H1 (cell line): ENCODE measurements at regions of chr7 and their contacts with region 1.

Region 1: DNA sequence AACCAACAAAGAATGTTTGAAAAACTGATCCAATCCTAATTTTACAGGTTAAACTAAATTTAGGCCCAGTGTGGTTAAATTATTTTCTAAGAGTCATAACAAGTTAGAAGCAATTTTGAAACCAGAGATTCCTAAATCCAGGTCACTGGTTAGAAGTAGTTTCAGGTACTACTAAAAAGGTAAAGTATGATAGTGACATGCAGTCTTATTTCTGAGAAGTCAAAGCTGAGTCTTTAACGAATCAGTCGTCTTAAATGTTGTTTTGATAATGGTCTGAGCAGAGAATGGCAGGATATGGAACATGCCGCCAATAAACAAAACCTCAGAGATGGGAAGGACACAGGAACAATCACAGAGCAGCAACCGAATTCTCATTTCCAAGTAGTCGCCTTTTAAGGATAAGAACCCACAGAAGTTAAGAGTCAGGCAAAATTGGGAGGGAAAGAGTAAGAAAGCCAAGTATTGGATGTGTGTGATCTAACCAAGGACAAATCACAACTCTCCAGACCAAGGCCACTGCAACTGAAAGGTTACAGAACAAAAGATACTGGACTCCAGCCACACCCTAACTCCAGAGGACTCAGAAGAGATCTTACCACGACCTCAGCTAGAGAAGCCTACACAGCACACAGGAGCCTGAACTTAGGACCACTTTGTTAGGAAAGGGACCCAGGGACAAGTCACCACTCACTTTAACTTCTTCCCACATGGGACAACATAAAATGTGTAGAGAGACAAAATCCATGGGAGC is 19.7 kb downstream of the TMEM243 start:
- DNase-seq: no peak
- H3K4me3 ChIP-seq: no peak overlapping the region
- H3K27ac ChIP-seq: no peak overlapping the region
- H3K4me1 ChIP-seq: 0 out of 7 replicates have a peak, but pooled peaks cover 0 to 2% (median 0%) of the 10 kb centered on the region in 4 experiments
- H3K27me3 ChIP-seq: no peaks in the 10 kb centered on the region
- CTCF ChIP-seq: no peak
- EP300 ChIP-seq: no peak
- POLR2A ChIP-seq: peak in 1 of 2 experiments; percentile 33; a peak in 1 of 3 replicates
- RAD21 ChIP-seq: no peak

Region 2: GRCh38 chr7:87213811-87214210 is 13.9 kb after region 1 on chr7:
- CTCF ChIA-PET with region 1: interaction called, 5 read pairs
- POLR2A ChIA-PET with region 1: interaction called, 18 read pairs
- DNase-seq: no peak
- H3K4me3 ChIP-seq: no peak overlapping the region
- H3K27ac ChIP-seq: no peak overlapping the region
- H3K4me1 ChIP-seq: peaks cover 0 to 7% (median 0%) of the 10 kb centered on the region in 4 experiments; a peak in 1 of 7 replicates
- H3K27me3 ChIP-seq: no peaks in the 10 kb centered on the region
- CTCF ChIP-seq: no peak
- EP300 ChIP-seq: no peak
- POLR2A ChIP-seq: no peak
- RAD21 ChIP-seq: no peak

Region 3: GRCh38 chr7:87219545-87220025 is 19.7 kb after region 1 on chr7 and contains the start of gene TMEM243:
- CTCF ChIA-PET with region 1: interaction called, 5 read pairs
- POLR2A ChIA-PET with region 1: interaction called, 18 read pairs
- DNase-seq: peak in 1 of 2 experiments; percentile 73
- H3K4me3 ChIP-seq: peak within 1 kb of the TSS; percentile 80 to 98 (median 92)
- H3K27ac ChIP-seq: peak within 1 kb of the TSS; percentile 60; the same call in 1 of the 2 replicates
- H3K4me1 ChIP-seq: peaks cover 0 to 7% (median under 1%) of the 10 kb centered on the region in 4 experiments; a peak in 4 of 7 replicates
- H3K27me3 ChIP-seq: peaks cover 0 to 18% (median 15%) of the 10 kb centered on the region in 4 experiments; a peak in 5 of 7 replicates
- CTCF ChIP-seq: peak in 1 of 3 experiments; percentile 9; a peak in 1 of 4 replicates
- EP300 ChIP-seq: no peak
- POLR2A ChIP-seq: peak in 1 of 2 experiments; percentile 46; a peak in 1 of 3 replicates
- RAD21 ChIP-seq: no peak
- total RNA-seq, gene TMEM243: 26.0 and 27.6 TPM in 2 replicates

Region 4: GRCh38 chr7:87416682-87417587 is 217.1 kb after region 1 on chr7:
- CTCF ChIA-PET with region 1: no interaction called
- POLR2A ChIA-PET with region 1: no interaction called
- DNase-seq: peak; percentile 27 to 62
- H3K4me3 ChIP-seq: no peak overlapping the region
- H3K27ac ChIP-seq: no peak overlapping the region
- H3K4me1 ChIP-seq: no peaks in the 10 kb centered on the region
- H3K27me3 ChIP-seq: no peaks in the 10 kb centered on the region
- CTCF ChIP-seq: peak in 2 of 3 experiments; percentile 64 to 67; a peak in 3 of 4 replicates
- EP300 ChIP-seq: no peak
- POLR2A ChIP-seq: no peak
- RAD21 ChIP-seq: peak; percentile 84 to 91